Heart right ventricle (tissue), 16 donors: ENCODE measurements at regions of chr17 and their contacts with region 1.

Region 1: DNA sequence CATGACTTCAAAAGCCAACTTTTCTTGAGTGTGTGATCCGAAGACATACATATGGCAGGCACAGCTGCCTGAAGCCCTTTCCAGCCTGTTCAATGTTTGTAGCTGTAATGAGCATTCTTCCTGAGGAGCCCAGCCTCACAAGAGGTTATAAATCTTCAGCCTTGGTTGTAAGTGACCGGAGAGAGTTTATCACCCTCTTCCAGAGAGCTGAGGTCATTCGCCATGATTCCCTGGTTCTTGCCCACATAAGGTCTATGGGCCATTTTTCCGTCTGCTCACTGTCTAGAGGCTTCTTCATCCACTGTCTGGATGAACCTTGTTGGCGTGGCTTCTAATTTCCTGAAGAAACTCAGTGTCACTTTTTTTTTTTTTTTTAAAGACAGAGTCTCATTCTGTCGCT is 9.7 kb upstream of the CSF3 start:
- DNase-seq: no peak
- ATAC-seq: no peak
- H3K4me3 ChIP-seq: no peak overlapping the region
- H3K27ac ChIP-seq: no peak overlapping the region
- H3K4me1 ChIP-seq: no peaks in the 10 kb centered on the region
- H3K27me3 ChIP-seq: no peaks in the 10 kb centered on the region
- CTCF ChIP-seq: no peak

Region 2: GRCh38 chr17:39769974-39770587 is 235.4 kb before region 1 on chr17:
- intact Hi-C with region 1: no loop called
- DNase-seq: no peak
- ATAC-seq: no peak
- H3K4me3 ChIP-seq: no peak overlapping the region
- H3K27ac ChIP-seq: peak overlapping the region in 1 of 10 donors; percentile 61
- H3K4me1 ChIP-seq: peaks cover 0 to 8% (median 0%) of the 10 kb centered on the region in 9 donors
- H3K27me3 ChIP-seq: peaks cover 0 to 38% (median 17%) of the 10 kb centered on the region in 7 donors
- CTCF ChIP-seq: no peak

Region 3: GRCh38 chr17:39972271-39972670 is 33.2 kb before region 1 on chr17:
- intact Hi-C with region 1: no loop called
- DNase-seq: no peak
- ATAC-seq: peak in 3 of 8 donors; percentile 33 to 79 (median 61)
- H3K4me3 ChIP-seq: no peak overlapping the region
- H3K27ac ChIP-seq: peak overlapping the region in 2 of 10 donors; percentile 2 to 82
- H3K4me1 ChIP-seq: peaks cover 0 to 52% (median 0%) of the 10 kb centered on the region in 9 donors
- H3K27me3 ChIP-seq: peaks cover 0 to 44% (median 4%) of the 10 kb centered on the region in 7 donors
- CTCF ChIP-seq: no peak

Region 4: DNA sequence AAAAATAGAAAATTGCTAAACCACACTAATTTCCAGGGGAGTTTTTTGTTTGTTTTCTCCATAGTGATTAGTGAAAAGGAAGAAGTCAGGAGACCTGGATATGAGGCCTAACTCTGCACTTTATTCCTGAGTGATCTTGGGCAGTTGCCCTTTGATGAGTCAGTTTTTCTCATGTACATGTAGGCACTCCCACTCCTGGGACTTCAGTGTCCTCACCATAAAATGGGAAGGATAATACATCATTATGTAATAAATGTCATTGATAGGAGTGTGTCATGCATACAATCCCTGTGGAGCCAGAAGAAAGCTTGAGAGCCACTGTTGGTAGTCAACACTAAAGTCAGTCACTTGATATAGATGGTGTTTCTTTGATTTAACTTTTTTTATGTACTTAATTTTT is 246.1 kb after region 1 on chr17:
- intact Hi-C with region 1: no loop called
- DNase-seq: peak in 1 of 2 donors; percentile 28
- ATAC-seq: peak; percentile 20 to 90 (median 62)
- H3K4me3 ChIP-seq: no peak overlapping the region
- H3K27ac ChIP-seq: peak overlapping the region in 2 of 10 donors; percentile 8 to 26
- H3K4me1 ChIP-seq: peaks cover 0 to 34% (median 16%) of the 10 kb centered on the region in 9 donors
- H3K27me3 ChIP-seq: no peaks in the 10 kb centered on the region
- CTCF ChIP-seq: no peak

Region 5: GRCh38 chr17:40264458-40265185 is 259.1 kb after region 1 on chr17:
- intact Hi-C with region 1: loop called in 1 of 10 experiments (anchors 10 kb)
- DNase-seq: no peak
- ATAC-seq: peak in 1 of 8 donors; percentile 13
- H3K4me3 ChIP-seq: no peak overlapping the region
- H3K27ac ChIP-seq: no peak overlapping the region
- H3K4me1 ChIP-seq: peaks cover 0 to 9% (median 0%) of the 10 kb centered on the region in 9 donors
- H3K27me3 ChIP-seq: no peaks in the 10 kb centered on the region
- CTCF ChIP-seq: no peak